ENCODE measurements at regions of chr16 and their contacts with region 1.

Region 1: DNA sequence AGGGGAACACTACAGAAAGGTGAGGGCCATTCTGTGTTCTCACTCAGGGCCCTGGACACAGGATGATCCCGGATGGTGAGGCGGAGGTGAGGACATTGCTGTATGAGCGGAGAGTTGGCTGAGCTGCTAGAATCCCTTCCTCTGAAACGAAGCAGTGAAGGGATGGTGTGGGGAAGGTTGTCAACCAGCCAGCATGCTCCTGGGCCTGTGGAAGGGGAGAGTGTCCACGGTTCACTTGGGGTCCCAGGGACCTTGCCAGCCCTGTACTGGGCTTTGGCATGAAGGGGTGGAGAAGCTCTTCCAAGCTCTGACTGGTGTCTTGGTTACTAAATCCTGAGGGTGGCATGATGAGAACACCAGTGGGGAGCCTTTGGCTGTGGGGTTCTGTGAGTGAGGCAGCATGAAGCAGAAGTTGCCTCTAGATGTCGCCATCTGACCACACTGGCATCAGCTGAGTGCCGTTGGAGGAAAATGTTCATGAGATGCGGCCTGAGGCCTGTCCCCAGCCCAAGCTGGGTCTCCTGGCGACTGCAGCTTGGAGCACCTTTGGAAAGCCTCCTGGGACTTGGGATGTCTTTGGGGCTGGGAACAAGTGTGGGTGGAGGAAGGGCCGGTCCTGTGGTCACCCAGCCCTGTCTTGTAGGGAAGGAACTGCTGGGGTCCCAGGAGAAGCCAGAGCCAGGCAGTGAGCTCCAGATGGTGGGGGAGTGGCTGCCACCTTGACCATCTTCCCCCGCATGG is 14.8 kb downstream of the PDP2 start:
- DNase-seq: peak in 1 of 2 experiments; percentile 66
- H3K4me3 ChIP-seq: no peak overlapping the region
- H3K27ac ChIP-seq: no peak overlapping the region
- H3K4me1 ChIP-seq: peaks cover 24% of the 10 kb centered on the region
- H3K27me3 ChIP-seq: no peaks in the 10 kb centered on the region
- CTCF ChIP-seq: peak; percentile 87

Region 2: DNA sequence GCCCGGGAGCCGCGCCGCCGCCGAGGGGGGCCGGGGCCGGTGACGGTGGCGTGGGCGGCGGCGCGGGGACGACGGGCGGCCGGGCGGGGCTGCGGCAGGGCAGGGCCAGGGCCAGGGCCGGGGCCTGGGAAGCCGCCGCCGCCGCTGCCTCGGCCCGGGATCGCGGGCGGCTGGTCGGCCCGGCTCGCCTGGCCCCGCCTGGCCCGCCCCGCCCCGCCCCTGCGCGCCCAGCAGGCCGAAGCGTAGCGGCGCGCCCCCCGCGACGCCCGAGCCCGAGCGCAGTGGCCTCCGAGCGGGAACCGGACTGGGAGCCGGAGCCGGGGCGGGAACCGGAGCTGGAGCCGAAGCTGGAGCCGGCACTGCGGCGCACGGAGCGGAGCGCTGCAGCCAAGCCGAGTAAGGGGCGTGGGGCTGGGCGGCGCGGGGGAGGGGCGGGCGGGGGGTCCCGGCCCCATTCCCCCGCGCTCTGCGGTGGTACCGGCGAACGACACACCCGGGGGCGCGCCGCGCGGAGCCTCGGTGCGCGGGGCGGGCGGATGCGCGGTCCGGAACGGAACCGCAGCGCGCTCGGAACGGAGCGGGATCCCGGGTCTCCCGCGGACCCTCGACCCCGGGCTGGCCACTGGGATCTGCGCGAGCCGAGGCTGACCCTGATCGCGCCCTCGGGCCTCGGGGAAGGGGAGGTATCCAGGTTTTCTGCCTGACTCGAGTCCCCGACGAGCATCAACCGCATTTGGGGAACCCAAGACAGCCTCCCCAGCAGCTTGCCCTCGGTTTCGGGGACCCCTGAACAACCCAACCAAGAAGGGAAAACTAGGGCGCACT is 467.9 kb before region 1 on chr16 and contains the start of gene BEAN1:
- CTCF ChIA-PET with region 1: no interaction called
- POLR2A ChIA-PET with region 1: no interaction called
- intact Hi-C with region 1: no loop called
- DNase-seq: peak in 1 of 2 experiments; percentile 29
- H3K4me3 ChIP-seq: peak within 1 kb of the TSS; percentile 45; the same call in 1 of the 2 replicates
- H3K27ac ChIP-seq: no peak within 1 kb of the TSS
- H3K4me1 ChIP-seq: no peaks in the 10 kb centered on the region
- H3K27me3 ChIP-seq: 0 out of 2 replicates have a peak, but pooled peaks cover 3% of the 10 kb centered on the region
- CTCF ChIP-seq: no peak
- total RNA-seq, gene BEAN1: 0.37 and 0.48 TPM in 2 replicates

Region 3: DNA sequence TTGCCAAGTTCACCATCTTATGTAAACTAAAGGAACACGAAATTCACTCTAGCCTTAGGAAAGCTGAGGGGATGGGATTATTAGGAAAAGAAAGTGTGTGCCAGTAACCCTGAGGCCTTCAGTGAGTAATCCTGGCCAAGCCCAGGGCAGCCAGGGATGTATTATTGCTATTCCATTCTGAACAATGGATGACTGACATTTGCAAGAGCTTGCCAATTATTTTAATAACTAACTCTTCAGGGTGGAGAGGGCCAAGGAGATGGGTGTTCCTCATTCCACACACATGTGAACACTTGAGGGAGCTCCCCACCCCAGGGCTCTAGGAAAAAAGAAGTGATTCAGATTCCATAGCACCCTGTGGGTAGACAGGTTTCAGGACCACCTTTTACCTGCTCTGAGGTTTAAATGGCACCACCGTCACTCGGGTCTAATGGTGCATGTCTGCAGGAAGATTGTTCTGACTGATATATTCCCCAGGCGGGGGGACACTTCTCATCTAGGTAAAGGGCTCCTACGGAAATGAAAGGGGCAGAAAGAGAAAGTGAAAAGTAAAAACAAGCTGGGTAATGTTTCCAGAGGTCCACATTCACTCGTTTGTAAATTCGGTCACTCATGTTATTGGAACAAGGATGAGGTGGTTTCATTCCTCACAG is 386.7 kb before region 1 on chr16:
- CTCF ChIA-PET with region 1: no interaction called
- POLR2A ChIA-PET with region 1: no interaction called
- intact Hi-C with region 1: no loop called
- DNase-seq: peak; percentile 80 to 99
- H3K4me3 ChIP-seq: peak overlapping the region; percentile 15; the same call in 1 of the 2 replicates
- H3K27ac ChIP-seq: peak overlapping the region; percentile 81
- H3K4me1 ChIP-seq: peaks cover 78% of the 10 kb centered on the region
- H3K27me3 ChIP-seq: no peaks in the 10 kb centered on the region
- CTCF ChIP-seq: no peak; the same call in 1 of the 2 replicates

Region 4: GRCh38 chr16:66924527-66925321 is 29.6 kb after region 1 on chr16:
- CTCF ChIA-PET with region 1: interaction called, 15 read pairs
- POLR2A ChIA-PET with region 1: no interaction called
- intact Hi-C with region 1: loop called (anchors 1 kb)
- DNase-seq: peak in 1 of 2 experiments; percentile 34
- H3K4me3 ChIP-seq: no peak overlapping the region
- H3K27ac ChIP-seq: no peak overlapping the region
- H3K4me1 ChIP-seq: peaks cover 41% of the 10 kb centered on the region
- H3K27me3 ChIP-seq: no peaks in the 10 kb centered on the region
- CTCF ChIP-seq: no peak

Region 5: GRCh38 chr16:66947302-66948065 is 52.4 kb after region 1 on chr16:
- CTCF ChIA-PET with region 1: interaction called, 7 read pairs
- POLR2A ChIA-PET with region 1: no interaction called
- intact Hi-C with region 1: loop called (anchors 1 kb)
- DNase-seq: peak; percentile 72 to 80
- H3K4me3 ChIP-seq: peak overlapping the region; percentile 66
- H3K27ac ChIP-seq: no peak overlapping the region
- H3K4me1 ChIP-seq: no peaks in the 10 kb centered on the region
- H3K27me3 ChIP-seq: no peaks in the 10 kb centered on the region
- CTCF ChIP-seq: peak; percentile 94

Region 6: DNA sequence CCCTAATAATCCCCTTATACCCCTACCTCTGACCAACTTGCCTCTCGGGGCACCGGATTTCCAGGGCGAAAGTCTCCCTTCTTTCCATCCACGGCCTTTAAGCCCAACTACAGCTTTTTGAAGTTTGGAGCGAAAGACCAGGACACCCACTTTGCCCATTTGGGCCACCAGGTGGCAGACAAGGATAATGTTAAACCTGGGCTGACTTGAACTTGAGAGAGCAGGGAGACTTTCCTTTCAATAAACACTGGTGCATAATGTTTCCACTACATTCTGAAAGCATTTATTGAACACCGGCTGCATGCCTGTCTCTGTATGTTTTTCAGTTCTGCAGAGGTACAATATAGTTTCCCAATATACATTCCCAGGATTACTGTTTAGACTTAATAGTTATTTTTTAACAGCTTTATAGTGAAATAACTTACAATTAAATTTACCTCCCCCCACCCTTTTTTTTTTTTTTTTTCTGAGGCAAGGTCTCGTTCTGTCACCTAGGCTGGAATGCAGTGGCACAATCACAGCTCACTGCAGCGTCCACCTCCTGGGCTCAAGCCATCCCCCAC is 59.1 kb after region 1 on chr16:
- CTCF ChIA-PET with region 1: no interaction called
- POLR2A ChIA-PET with region 1: no interaction called
- intact Hi-C with region 1: loop called (anchors 1 kb)
- DNase-seq: peak; percentile 55 to 81
- H3K4me3 ChIP-seq: no peak overlapping the region
- H3K27ac ChIP-seq: no peak overlapping the region
- H3K4me1 ChIP-seq: no peaks in the 10 kb centered on the region
- H3K27me3 ChIP-seq: no peaks in the 10 kb centered on the region
- CTCF ChIP-seq: peak; percentile 88

Region 7: GRCh38 chr16:66977341-66978113 is 82.4 kb after region 1 on chr16:
- CTCF ChIA-PET with region 1: no interaction called
- POLR2A ChIA-PET with region 1: no interaction called
- intact Hi-C with region 1: loop called (anchors 1 kb)
- DNase-seq: peak; percentile 62 to 82
- H3K4me3 ChIP-seq: no peak overlapping the region
- H3K27ac ChIP-seq: no peak overlapping the region
- H3K4me1 ChIP-seq: no peaks in the 10 kb centered on the region
- H3K27me3 ChIP-seq: no peaks in the 10 kb centered on the region
- CTCF ChIP-seq: peak; percentile 96

Measured in PC-9 (cell line).